Activated CD8-positive, alpha-beta T cell treated with anti-CD3 and anti-CD28 coated beads for 36 hours (primary cell): ENCODE measurements at regions of chr18 and their contacts with region 1.

Region 1: GRCh38 chr18:37385846-37386778 is 179.5 kb downstream of the CELF4 start:
- DNase-seq: no peak
- ATAC-seq: no peak
- H3K4me3 Mint-ChIP-seq: no peak overlapping the region
- H3K27ac Mint-ChIP-seq: no peak overlapping the region
- H3K4me1 Mint-ChIP-seq: no peaks in the 10 kb centered on the region
- H3K27me3 Mint-ChIP-seq: peaks cover 3% of the 10 kb centered on the region
- CTCF ChIP-seq: peak; percentile 81

Region 2: GRCh38 chr18:37403100-37403781 is 17.1 kb after region 1 on chr18:
- CTCF ChIA-PET with region 1: no interaction called
- POLR2A ChIA-PET with region 1: no interaction called
- intact Hi-C with region 1: no loop called
- DNase-seq: no peak
- ATAC-seq: no peak
- H3K4me3 Mint-ChIP-seq: no peak overlapping the region
- H3K27ac Mint-ChIP-seq: no peak overlapping the region
- H3K4me1 Mint-ChIP-seq: peaks cover 2% of the 10 kb centered on the region
- H3K27me3 Mint-ChIP-seq: no peaks in the 10 kb centered on the region
- CTCF ChIP-seq: no peak

Region 3: DNA sequence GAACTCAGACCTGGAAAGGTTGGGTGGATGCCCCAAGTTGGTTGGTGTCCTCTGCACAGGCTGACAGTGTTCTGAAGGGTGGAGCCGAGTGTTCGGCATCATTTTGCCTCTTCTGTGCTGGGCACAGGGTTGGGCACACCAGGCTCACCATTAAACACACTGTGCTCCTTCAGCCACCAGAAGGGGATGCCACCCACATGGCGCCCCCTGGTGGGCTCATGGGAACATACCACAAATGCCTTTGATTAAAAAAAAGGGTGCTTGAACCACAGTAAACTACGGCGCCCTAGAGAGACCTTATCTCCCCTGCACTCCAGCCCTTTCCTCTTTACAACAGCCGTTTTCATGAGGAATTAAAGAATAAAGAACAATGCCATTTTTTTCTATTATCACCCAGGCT is 90.1 kb after region 1 on chr18:
- CTCF ChIA-PET with region 1: interaction called, 5 read pairs
- POLR2A ChIA-PET with region 1: no interaction called
- intact Hi-C with region 1: loop called (anchors 10 kb)
- DNase-seq: peak; percentile 53
- ATAC-seq: no peak
- H3K4me3 Mint-ChIP-seq: no peak overlapping the region
- H3K27ac Mint-ChIP-seq: no peak overlapping the region
- H3K4me1 Mint-ChIP-seq: no peaks in the 10 kb centered on the region
- H3K27me3 Mint-ChIP-seq: peaks cover 9% of the 10 kb centered on the region
- CTCF ChIP-seq: peak; percentile 54

Region 4: DNA sequence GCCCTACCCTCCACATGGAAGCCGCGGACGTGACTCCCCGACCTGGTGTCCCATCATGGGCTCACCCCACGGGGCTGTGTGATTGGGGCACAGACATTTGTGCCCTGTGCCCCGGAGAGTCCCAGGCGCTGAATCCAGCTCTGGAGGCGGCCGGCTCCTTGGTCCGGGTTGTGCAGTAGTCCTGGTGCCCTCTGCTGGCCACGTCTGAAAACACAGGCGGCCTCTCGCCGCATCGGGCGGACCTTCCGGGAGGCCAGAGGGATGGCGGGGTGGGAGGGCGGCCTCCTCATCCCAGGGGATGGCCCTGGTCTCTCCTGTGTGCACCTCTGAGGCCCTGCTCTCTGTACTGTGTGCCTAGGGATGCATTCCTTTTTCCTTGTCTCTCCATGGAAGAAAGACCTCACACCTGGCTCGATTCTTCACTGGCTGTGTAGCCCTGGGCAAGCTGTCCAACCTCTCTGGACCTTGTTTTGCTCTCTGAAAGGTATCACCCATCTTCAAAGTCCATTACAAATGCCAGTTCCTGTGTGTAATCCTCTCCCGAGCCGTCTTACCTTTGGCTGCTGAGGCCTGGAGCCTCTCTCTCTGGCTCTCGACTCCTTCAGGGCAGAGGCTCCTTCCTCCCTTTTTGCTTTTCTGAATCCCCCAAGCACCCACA is 151.9 kb after region 1 on chr18:
- CTCF ChIA-PET with region 1: interaction called, 6 read pairs
- POLR2A ChIA-PET with region 1: no interaction called
- intact Hi-C with region 1: loop called (anchors 5 kb)
- DNase-seq: peak; percentile 70
- ATAC-seq: peak; percentile 83
- H3K4me3 Mint-ChIP-seq: no peak overlapping the region
- H3K27ac Mint-ChIP-seq: no peak overlapping the region
- H3K4me1 Mint-ChIP-seq: peaks cover 3% of the 10 kb centered on the region
- H3K27me3 Mint-ChIP-seq: peaks cover 16% of the 10 kb centered on the region
- CTCF ChIP-seq: peak; percentile 68

Region 5: GRCh38 chr18:37553633-37554395 is 167.7 kb after region 1 on chr18:
- CTCF ChIA-PET with region 1: no interaction called
- POLR2A ChIA-PET with region 1: no interaction called
- intact Hi-C with region 1: no loop called
- DNase-seq: no peak
- ATAC-seq: no peak
- H3K4me3 Mint-ChIP-seq: no peak overlapping the region
- H3K27ac Mint-ChIP-seq: no peak overlapping the region
- H3K4me1 Mint-ChIP-seq: no peaks in the 10 kb centered on the region
- H3K27me3 Mint-ChIP-seq: peaks cover 1% of the 10 kb centered on the region
- CTCF ChIP-seq: no peak

Region 6: GRCh38 chr18:37729716-37730115 is 343.6 kb after region 1 on chr18:
- CTCF ChIA-PET with region 1: no interaction called
- POLR2A ChIA-PET with region 1: no interaction called
- intact Hi-C with region 1: no loop called
- DNase-seq: no peak
- ATAC-seq: no peak
- H3K4me3 Mint-ChIP-seq: no peak overlapping the region
- H3K27ac Mint-ChIP-seq: no peak overlapping the region
- H3K4me1 Mint-ChIP-seq: no peaks in the 10 kb centered on the region
- H3K27me3 Mint-ChIP-seq: no peaks in the 10 kb centered on the region
- CTCF ChIP-seq: no peak